ENCODE measurements at regions of chr11 and their contacts with region 1.

Region 1: GRCh38 chr11:68414496-68415220 is 45.9 kb upstream of the PPP6R3 start:
- DNase-seq: no peak
- H3K4me3 ChIP-seq: no peak overlapping the region
- H3K27ac ChIP-seq: no peak overlapping the region
- H3K4me1 ChIP-seq: peaks cover 0 to 13% (median 8%) of the 10 kb centered on the region in 4 donors
- H3K27me3 ChIP-seq: no peaks in the 10 kb centered on the region
- CTCF ChIP-seq: no peak
- EP300 ChIP-seq: no peak
- POLR2A ChIP-seq: no peak

Region 2: GRCh38 chr11:69257838-69258658 is 843.4 kb after region 1 on chr11:
- in situ Hi-C with region 1: no loop called
- intact Hi-C with region 1: no loop called
- DNase-seq: no peak
- H3K4me3 ChIP-seq: no peak overlapping the region
- H3K27ac ChIP-seq: no peak overlapping the region
- H3K4me1 ChIP-seq: no peaks in the 10 kb centered on the region
- H3K27me3 ChIP-seq: no peaks in the 10 kb centered on the region
- CTCF ChIP-seq: no peak
- EP300 ChIP-seq: no peak
- POLR2A ChIP-seq: no peak

Region 3: DNA sequence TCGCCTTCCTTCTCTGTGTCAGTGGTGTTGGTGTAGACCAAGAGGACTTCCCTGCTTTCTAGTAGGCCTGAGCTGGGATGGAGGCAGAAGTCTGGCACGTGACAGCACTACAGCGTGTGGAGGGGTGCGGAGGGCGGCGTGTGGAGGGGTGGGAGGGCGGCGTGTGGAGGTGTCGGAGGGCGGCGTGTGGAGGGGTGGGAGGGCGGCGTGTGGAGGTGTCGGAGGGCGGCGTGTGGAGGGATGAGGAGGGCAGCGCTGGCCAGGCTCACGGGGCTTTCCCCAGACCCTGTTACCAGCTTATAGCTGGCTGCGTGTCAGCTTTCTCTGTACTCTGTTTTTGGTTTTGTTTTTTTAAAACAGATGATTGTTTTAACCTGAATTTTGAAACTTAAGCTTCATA is 1937.9 kb after region 1 on chr11:
- in situ Hi-C with region 1: no loop called
- intact Hi-C with region 1: loop called (anchors 5 kb)
- DNase-seq: no peak
- H3K4me3 ChIP-seq: no peak overlapping the region
- H3K27ac ChIP-seq: no peak overlapping the region
- H3K4me1 ChIP-seq: no peaks in the 10 kb centered on the region
- H3K27me3 ChIP-seq: no peaks in the 10 kb centered on the region
- CTCF ChIP-seq: no peak
- EP300 ChIP-seq: no peak
- POLR2A ChIP-seq: no peak